ENCODE measurements at regions of chr3 and their contacts with region 1.

Region 1: DNA sequence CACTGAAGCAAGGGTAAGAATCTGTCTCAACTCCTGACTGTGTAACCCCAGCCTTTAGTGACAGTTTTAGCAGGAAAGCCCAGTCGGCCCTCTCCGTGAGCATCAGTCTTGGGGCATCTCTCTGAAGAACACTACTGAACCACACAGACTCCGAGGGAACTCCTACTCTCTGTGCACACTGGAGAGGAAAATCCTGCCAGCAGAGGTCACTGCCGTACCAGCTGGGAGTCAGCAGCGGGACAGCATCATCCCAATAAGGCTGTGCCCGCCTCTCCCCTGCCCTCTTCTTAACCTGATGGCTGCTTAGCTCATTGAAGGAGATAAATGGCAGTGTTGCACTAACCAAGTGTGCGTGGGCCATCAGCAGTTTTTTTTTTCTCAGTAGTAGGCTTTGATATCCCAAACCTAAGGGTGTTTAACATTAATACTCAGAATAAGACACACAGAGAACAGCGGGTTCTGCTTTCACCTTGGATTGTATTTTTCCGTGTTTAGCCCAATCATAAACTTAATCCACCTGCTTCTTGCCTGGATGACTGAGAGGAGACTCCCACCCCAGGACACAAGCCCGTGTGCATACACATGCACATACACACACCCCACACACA is 26.6 kb upstream of the RASA2 start:
- DNase-seq: peak; percentile 72 to 88 (median 82)
- ATAC-seq: peak; percentile 100
- H3K4me3 ChIP-seq: no peak overlapping the region
- H3K4me3 Mint-ChIP-seq: no peak overlapping the region
- H3K27ac ChIP-seq: no peak overlapping the region
- H3K27ac Mint-ChIP-seq: peak overlapping the region in 1 of 9 donors; percentile 43
- H3K4me1 ChIP-seq: no peaks in the 10 kb centered on the region
- H3K4me1 Mint-ChIP-seq: peaks cover 0 to 20% (median 5%) of the 10 kb centered on the region in 7 donors
- H3K27me3 ChIP-seq: no peaks in the 10 kb centered on the region
- H3K27me3 Mint-ChIP-seq: peaks cover 0 to 2% (median 0%) of the 10 kb centered on the region in 5 donors

Region 2: DNA sequence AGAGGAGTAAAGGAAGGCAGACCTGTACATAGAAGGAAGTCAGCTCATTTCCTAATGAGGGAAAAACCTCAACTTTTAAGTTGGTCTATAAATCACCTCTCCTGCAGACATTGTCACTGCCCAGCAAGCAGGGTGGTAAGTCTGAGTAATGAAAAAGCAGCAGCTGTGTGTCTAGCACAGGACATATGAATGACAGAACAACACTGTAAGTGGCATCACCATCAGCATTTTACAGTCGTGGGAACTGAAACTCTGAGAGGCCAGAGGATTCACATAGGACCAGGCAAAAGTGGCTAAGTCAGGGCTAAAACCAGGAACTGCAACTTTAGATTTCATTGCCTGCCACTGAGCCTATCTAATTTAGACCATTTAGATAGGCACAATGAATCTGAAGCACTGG is 1289.6 kb before region 1 on chr3:
- CTCF ChIA-PET with region 1: no interaction called
- POLR2A ChIA-PET with region 1: no interaction called
- intact Hi-C with region 1: no loop called
- DNase-seq: no peak
- ATAC-seq: no peak
- H3K4me3 ChIP-seq: no peak overlapping the region
- H3K4me3 Mint-ChIP-seq: no peak overlapping the region
- H3K27ac ChIP-seq: no peak overlapping the region
- H3K27ac Mint-ChIP-seq: no peak overlapping the region
- H3K4me1 ChIP-seq: no peaks in the 10 kb centered on the region
- H3K4me1 Mint-ChIP-seq: no peaks in the 10 kb centered on the region
- H3K27me3 ChIP-seq: no peaks in the 10 kb centered on the region
- H3K27me3 Mint-ChIP-seq: peaks cover 0 to 22% (median 18%) of the 10 kb centered on the region in 5 donors

Region 3: DNA sequence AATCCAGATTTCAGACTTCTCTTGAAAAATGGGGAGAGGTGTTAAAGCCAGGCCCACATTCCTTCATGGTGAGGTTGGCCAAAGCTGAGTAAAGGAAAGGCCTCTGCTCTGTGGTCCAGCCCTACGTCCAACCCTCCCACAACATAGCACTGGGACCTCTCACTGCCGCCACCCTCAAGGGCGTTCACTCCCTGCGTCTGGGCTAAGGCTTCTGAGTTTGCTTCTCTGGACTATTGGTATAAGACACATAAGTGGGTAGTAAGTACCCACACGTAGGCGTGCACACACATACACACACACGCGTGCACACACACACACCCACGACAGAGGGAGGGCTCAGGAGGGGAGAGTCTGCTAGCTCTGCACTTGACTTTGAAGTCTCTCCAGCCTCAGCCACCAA is 308.8 kb before region 1 on chr3:
- CTCF ChIA-PET with region 1: no interaction called
- POLR2A ChIA-PET with region 1: no interaction called
- intact Hi-C with region 1: no loop called
- DNase-seq: no peak
- ATAC-seq: no peak
- H3K4me3 ChIP-seq: no peak overlapping the region
- H3K4me3 Mint-ChIP-seq: no peak overlapping the region
- H3K27ac ChIP-seq: no peak overlapping the region
- H3K27ac Mint-ChIP-seq: no peak overlapping the region
- H3K4me1 ChIP-seq: no peaks in the 10 kb centered on the region
- H3K4me1 Mint-ChIP-seq: peaks cover 0 to 1% (median 0%) of the 10 kb centered on the region in 7 donors
- H3K27me3 ChIP-seq: no peaks in the 10 kb centered on the region
- H3K27me3 Mint-ChIP-seq: peaks cover 2 to 11% (median 4%) of the 10 kb centered on the region in 5 donors

Region 4: DNA sequence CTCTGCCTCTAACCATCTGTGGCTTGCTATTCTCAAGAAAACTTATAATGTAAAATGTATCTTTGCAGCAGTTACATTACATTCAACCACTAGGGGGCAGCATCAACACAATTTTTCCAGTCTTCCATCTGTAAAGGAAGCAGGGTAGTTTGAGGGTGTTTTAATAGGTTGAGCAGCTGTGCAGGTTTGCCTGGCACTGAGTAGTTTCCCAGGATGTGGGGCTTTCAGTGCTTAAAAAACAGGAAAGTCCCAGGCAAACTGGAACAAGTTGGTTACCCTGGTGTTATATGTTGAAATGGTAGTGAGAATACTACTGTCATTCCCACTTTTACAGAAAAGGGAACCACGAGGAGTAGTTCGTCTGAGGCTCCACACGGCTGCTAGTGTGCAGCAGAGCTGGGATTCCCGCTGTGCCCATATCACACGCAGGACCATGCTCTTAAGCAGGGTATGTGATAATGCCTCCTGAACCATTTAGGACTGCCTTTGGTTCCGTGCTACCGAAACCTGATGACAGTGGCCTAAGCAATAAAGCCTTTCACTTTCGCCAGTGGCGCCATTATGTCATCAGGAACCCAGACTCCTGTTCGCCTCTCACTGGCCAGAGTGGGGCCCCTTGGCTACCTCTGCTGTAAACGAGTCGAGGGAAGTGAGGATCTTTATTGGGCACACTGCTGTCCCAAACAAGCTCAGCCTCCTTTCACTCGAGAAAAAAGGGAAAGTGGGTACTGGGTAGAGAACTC is 156.5 kb before region 1 on chr3:
- CTCF ChIA-PET with region 1: interaction called, 161 read pairs
- POLR2A ChIA-PET with region 1: interaction called, 3 read pairs
- intact Hi-C with region 1: no loop called
- DNase-seq: peak in 7 of 9 donors; percentile 62 to 84 (median 77)
- ATAC-seq: peak; percentile 77
- H3K4me3 ChIP-seq: no peak overlapping the region
- H3K4me3 Mint-ChIP-seq: peak overlapping the region in 1 of 10 donors; percentile 3
- H3K27ac ChIP-seq: no peak overlapping the region
- H3K27ac Mint-ChIP-seq: peak overlapping the region in 5 of 9 donors; percentile 4 to 84 (median 50)
- H3K4me1 ChIP-seq: peaks cover 20 to 57% of the 10 kb centered on the region in 2 donors
- H3K4me1 Mint-ChIP-seq: peaks cover 30 to 90% (median 80%) of the 10 kb centered on the region in 7 donors
- H3K27me3 ChIP-seq: no peaks in the 10 kb centered on the region
- H3K27me3 Mint-ChIP-seq: peaks cover 0 to 5% (median 0%) of the 10 kb centered on the region in 5 donors

Region 5: DNA sequence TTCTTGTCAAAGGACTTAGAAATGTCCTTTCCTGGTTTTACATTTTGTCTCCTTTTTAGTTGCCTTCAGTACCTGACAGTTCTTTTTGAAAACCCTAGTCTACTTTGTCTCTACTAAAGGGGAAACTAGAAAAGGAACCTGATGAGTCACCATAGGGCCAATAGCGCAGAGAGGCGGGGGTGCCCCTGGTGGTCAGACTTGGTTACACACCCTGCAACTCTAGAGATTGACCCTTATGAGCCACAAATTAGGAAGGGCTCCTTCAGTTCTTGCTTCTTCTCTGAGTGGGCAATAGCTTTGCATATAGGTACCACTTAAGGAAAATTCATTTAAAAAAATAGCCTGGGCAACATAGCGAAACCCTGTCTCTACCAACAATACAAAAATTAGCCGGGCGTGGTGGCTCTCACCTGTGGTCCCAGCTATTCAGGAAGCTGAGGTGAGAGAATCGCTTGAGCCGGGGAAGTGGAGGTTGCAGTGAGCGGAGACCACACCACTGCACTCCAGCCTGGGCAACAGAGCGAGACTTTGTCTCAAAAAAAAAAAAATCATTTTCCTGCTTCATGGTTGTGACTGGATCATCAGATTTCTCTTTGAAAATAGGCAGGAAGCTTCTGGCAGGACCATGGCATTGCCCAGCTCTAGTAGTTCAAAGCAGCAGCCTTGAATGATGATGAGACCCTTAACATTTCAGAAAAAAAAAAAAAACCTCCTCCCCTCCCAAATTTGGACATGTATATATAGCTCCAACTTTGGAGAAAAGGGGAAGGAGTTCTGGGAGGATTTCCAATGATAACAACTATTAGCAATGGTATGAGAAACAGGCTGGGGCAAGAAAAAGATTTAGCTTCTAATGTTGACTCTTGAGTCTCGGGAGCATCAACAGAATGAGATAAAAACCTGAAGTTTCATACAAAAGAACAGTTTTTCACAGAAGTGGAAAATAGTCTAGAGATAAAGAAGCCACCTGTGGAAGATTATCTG is 18.5 kb before region 1 on chr3:
- CTCF ChIA-PET with region 1: interaction called, 33 read pairs
- POLR2A ChIA-PET with region 1: interaction called, 5 read pairs
- intact Hi-C with region 1: no loop called
- DNase-seq: peak; percentile 29 to 68 (median 64)
- ATAC-seq: peak; percentile 97
- H3K4me3 ChIP-seq: no peak overlapping the region
- H3K4me3 Mint-ChIP-seq: no peak overlapping the region
- H3K27ac ChIP-seq: no peak overlapping the region
- H3K27ac Mint-ChIP-seq: peak overlapping the region in 6 of 9 donors; percentile 14 to 79 (median 42)
- H3K4me1 ChIP-seq: peaks cover 0 to 13% of the 10 kb centered on the region in 2 donors
- H3K4me1 Mint-ChIP-seq: peaks cover 9 to 24% (median 24%) of the 10 kb centered on the region in 7 donors
- H3K27me3 ChIP-seq: no peaks in the 10 kb centered on the region
- H3K27me3 Mint-ChIP-seq: no peaks in the 10 kb centered on the region

Region 6: DNA sequence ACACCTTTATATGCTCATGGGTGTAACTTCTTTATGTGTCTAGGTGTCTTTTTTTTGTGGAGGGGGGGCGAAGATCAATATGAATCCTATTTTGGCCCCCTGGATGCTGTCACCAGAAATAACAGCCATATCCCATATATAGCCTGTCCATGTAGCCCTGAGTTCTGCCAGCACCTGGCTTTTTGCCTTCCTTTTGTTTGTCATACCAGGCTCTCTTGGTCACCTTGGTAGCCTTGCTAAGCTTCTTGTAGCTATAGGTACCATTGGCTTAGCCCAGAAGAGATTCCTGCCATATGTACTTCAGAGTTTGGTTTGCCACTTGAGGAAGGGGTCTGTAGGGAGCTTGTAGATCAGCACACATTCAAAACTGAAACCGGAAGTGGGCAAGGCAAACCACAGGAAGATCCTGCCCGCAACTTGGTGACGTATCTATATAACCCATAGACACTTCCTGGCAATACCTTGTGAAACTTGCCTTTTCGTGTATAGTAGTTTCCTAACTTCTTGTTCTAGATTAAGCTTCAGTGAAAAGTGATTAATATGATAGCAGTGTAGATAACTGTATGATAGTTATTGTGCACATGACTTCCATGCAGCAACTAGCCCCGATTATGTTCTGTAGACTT is 38.5 kb after region 1 on chr3:
- CTCF ChIA-PET with region 1: interaction called, 3 read pairs
- POLR2A ChIA-PET with region 1: interaction called, 3 read pairs
- intact Hi-C with region 1: loop called in 1 of 2 experiments (anchors 1 kb)
- DNase-seq: peak; percentile 34 to 96 (median 94)
- ATAC-seq: peak; percentile 91
- H3K4me3 ChIP-seq: peak overlapping the region; percentile 52
- H3K4me3 Mint-ChIP-seq: peak overlapping the region in 9 of 10 donors; percentile 68 to 89 (median 82)
- H3K27ac ChIP-seq: peak overlapping the region; percentile 73
- H3K27ac Mint-ChIP-seq: peak overlapping the region in 5 of 9 donors; percentile 93 to 99 (median 96)
- H3K4me1 ChIP-seq: peaks cover 66 to 69% of the 10 kb centered on the region in 2 donors
- H3K4me1 Mint-ChIP-seq: peaks cover 32 to 76% (median 50%) of the 10 kb centered on the region in 7 donors
- H3K27me3 ChIP-seq: no peaks in the 10 kb centered on the region
- H3K27me3 Mint-ChIP-seq: no peaks in the 10 kb centered on the region

Region 7: GRCh38 chr3:141644931-141645330 is 184.7 kb after region 1 on chr3:
- CTCF ChIA-PET with region 1: interaction called, 9 read pairs
- POLR2A ChIA-PET with region 1: no interaction called
- intact Hi-C with region 1: loop called in 1 of 2 experiments (anchors 1 kb)
- DNase-seq: peak; percentile 8 to 76 (median 43)
- ATAC-seq: peak; percentile 90
- H3K4me3 ChIP-seq: no peak overlapping the region
- H3K4me3 Mint-ChIP-seq: no peak overlapping the region
- H3K27ac ChIP-seq: no peak overlapping the region
- H3K27ac Mint-ChIP-seq: peak overlapping the region in 1 of 9 donors; percentile 52
- H3K4me1 ChIP-seq: no peaks in the 10 kb centered on the region
- H3K4me1 Mint-ChIP-seq: peaks cover 0 to 7% (median 0%) of the 10 kb centered on the region in 7 donors
- H3K27me3 ChIP-seq: no peaks in the 10 kb centered on the region
- H3K27me3 Mint-ChIP-seq: peaks cover 0 to 4% (median 0%) of the 10 kb centered on the region in 5 donors

Region 8: GRCh38 chr3:141746962-141747361 is 286.8 kb after region 1 on chr3:
- CTCF ChIA-PET with region 1: no interaction called
- POLR2A ChIA-PET with region 1: no interaction called
- intact Hi-C with region 1: no loop called
- DNase-seq: no peak
- ATAC-seq: no peak
- H3K4me3 ChIP-seq: no peak overlapping the region
- H3K4me3 Mint-ChIP-seq: no peak overlapping the region
- H3K27ac ChIP-seq: no peak overlapping the region
- H3K27ac Mint-ChIP-seq: peak overlapping the region in 2 of 9 donors; percentile 47 to 72
- H3K4me1 ChIP-seq: peaks cover 0 to 6% of the 10 kb centered on the region in 2 donors
- H3K4me1 Mint-ChIP-seq: peaks cover 9 to 35% (median 28%) of the 10 kb centered on the region in 7 donors
- H3K27me3 ChIP-seq: no peaks in the 10 kb centered on the region
- H3K27me3 Mint-ChIP-seq: no peaks in the 10 kb centered on the region

Region 9: DNA sequence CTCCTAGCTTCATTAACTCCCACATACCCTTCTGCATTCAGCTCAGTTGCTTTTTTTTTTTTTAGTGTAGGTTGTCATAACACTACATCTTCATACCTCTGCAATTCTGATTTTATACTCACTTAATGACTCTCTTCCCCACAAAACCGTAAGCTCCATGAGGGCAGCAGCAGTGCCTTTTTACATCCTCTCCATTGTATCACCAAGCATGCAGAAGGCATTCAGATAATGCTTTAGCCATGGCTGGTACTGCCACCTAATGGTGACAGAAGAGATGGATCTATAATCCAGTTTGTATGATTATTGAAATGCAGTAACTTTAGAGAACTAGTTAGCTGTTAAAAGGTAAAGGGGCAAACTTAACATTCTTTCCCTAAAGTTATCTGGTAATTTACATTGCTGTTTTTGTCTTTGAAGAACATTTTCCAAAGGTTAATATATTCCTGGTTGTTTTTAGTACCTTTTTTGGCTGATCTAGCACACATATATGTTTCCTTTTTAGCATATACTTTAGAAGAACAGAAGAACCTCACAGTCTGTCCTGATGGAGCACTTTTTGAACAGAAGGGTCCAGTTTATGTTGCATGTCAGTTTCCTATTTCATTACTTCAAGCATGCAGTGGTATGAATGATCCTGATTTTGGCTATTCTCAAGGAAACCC is 453.1 kb after region 1 on chr3:
- CTCF ChIA-PET with region 1: interaction called, 3 read pairs
- POLR2A ChIA-PET with region 1: no interaction called
- intact Hi-C with region 1: loop called (anchors 1 kb)
- DNase-seq: peak in 7 of 9 donors; percentile 40 to 72 (median 60)
- ATAC-seq: peak; percentile 93
- H3K4me3 ChIP-seq: no peak overlapping the region
- H3K4me3 Mint-ChIP-seq: no peak overlapping the region
- H3K27ac ChIP-seq: no peak overlapping the region
- H3K27ac Mint-ChIP-seq: peak overlapping the region in 2 of 9 donors; percentile 11 to 18
- H3K4me1 ChIP-seq: no peaks in the 10 kb centered on the region
- H3K4me1 Mint-ChIP-seq: peaks cover 0 to 5% (median 3%) of the 10 kb centered on the region in 7 donors
- H3K27me3 ChIP-seq: no peaks in the 10 kb centered on the region
- H3K27me3 Mint-ChIP-seq: no peaks in the 10 kb centered on the region

Region 10: GRCh38 chr3:142279965-142280590 is 819.9 kb after region 1 on chr3:
- CTCF ChIA-PET with region 1: interaction called, 5 read pairs
- POLR2A ChIA-PET with region 1: no interaction called
- intact Hi-C with region 1: loop called in 1 of 2 experiments (anchors 1 kb)
- DNase-seq: peak in 8 of 9 donors; percentile 18 to 64 (median 44)
- ATAC-seq: peak; percentile 71
- H3K4me3 ChIP-seq: no peak overlapping the region
- H3K4me3 Mint-ChIP-seq: no peak overlapping the region
- H3K27ac ChIP-seq: no peak overlapping the region
- H3K27ac Mint-ChIP-seq: no peak overlapping the region
- H3K4me1 ChIP-seq: peaks cover 0 to 8% of the 10 kb centered on the region in 2 donors
- H3K4me1 Mint-ChIP-seq: peaks cover 0 to 23% (median 0%) of the 10 kb centered on the region in 7 donors
- H3K27me3 ChIP-seq: no peaks in the 10 kb centered on the region
- H3K27me3 Mint-ChIP-seq: no peaks in the 10 kb centered on the region

Measured in naive thymus-derived CD4-positive, alpha-beta T cell (primary cell).